Gastrocnemius medialis (tissue), 4 donors: ENCODE measurements at regions of chr9 and their contacts with region 1.

Region 1: GRCh38 chr9:72038890-72039410 is 21.5 kb downstream of the C9orf57 start:
- DNase-seq: peak; percentile 40 to 61
- ATAC-seq: peak; percentile 72 to 91
- H3K4me3 ChIP-seq: no peak overlapping the region
- H3K27ac ChIP-seq: no peak overlapping the region
- H3K4me1 ChIP-seq: no peaks in the 10 kb centered on the region
- H3K27me3 ChIP-seq: no peaks in the 10 kb centered on the region
- CTCF ChIP-seq: peak; percentile 82 to 97 (median 91)
- POLR2A ChIP-seq: no peak

Region 2: DNA sequence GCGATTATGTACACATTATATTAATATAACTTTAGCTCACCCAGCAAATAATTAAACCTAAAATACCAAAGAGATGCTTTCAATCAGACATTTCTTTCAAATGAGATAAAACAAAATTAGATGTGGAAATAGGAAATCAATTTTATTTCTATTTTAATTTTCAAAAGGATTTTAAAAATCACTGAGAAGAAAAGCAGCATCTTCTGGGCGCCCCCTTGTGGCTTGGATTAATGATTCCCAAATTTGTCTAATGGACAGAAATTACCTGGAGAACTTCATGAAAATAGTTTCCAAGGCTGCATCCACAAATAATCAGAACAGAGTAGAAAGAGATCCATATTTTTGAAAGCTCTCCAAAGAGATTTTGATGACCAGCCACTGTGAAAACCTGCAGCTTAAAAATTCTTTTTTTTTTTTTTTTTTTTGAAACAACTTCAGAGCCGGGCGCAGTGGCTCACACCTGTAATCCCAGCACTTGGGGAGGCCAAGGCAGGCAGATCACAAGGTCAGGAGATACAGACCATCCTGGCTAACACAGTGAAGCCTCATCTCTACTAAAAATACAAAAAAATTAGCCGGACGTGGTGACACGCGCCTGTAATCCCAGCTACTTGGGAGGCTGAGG is 219.7 kb before region 1 on chr9:
- in situ Hi-C with region 1: no loop called
- intact Hi-C with region 1: loop called (anchors 5 kb)
- DNase-seq: no peak
- ATAC-seq: no peak
- H3K4me3 ChIP-seq: no peak overlapping the region
- H3K27ac ChIP-seq: no peak overlapping the region
- H3K4me1 ChIP-seq: peaks cover 0 to 3% of the 10 kb centered on the region in 2 donors
- H3K27me3 ChIP-seq: no peaks in the 10 kb centered on the region
- CTCF ChIP-seq: peak; percentile 47 to 74 (median 57)
- POLR2A ChIP-seq: no peak

Region 3: DNA sequence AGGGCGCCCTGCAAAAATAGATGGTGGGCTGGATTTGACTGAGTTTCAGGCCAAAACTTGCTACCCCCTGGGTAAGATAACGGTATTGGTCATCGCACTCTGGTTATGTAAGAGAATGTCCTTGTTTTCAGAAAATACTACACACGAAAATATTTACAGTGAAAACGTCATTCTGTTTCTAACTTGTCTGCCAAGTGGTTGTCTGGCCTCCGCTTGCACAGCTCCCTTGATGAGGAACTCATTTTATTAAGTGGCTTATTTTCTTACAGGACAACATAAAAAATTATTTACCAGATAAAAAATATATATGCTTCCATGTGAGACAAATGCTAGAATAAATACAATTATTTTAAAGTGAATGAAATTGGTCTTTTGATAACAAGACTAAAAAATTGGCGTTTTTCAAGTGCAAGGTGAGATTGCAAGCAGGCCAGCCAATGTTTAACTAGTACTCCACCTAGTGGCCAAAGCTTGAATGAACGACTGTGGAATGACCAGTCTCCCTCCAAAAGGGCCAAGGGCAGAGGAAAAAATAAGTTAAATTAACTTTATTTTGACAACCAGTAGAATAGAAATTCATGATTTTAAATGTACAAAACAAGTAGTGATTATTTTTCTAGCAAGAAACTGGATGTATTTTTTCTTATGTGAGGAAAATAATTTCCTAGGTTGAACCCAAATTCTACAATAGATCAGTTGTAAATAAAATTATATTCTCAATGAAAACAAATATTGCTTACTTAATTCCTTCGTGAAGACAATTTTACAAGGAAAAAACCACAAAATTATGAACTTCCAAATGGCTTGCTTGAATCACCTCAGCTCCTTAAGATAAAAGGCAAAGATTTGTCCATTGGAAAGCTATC is 232.9 kb after region 1 on chr9:
- in situ Hi-C with region 1: loop called (anchors 5 kb)
- intact Hi-C with region 1: loop called (anchors 1 kb)
- DNase-seq: peak in 1 of 2 donors; percentile 15
- ATAC-seq: peak; percentile 69 to 73
- H3K4me3 ChIP-seq: no peak overlapping the region
- H3K27ac ChIP-seq: no peak overlapping the region
- H3K4me1 ChIP-seq: no peaks in the 10 kb centered on the region
- H3K27me3 ChIP-seq: no peaks in the 10 kb centered on the region
- CTCF ChIP-seq: peak; percentile 72 to 90 (median 75)
- POLR2A ChIP-seq: no peak

Region 4: GRCh38 chr9:72396247-72397091 is 357.5 kb after region 1 on chr9:
- in situ Hi-C with region 1: no loop called
- intact Hi-C with region 1: no loop called
- DNase-seq: peak in 1 of 2 donors; percentile 19
- ATAC-seq: peak; percentile 95 to 100
- H3K4me3 ChIP-seq: peak overlapping the region in 2 of 4 donors; percentile 3 to 24
- H3K27ac ChIP-seq: peak overlapping the region; percentile 72 to 83 (median 82)
- H3K4me1 ChIP-seq: peaks cover 5 to 17% of the 10 kb centered on the region in 2 donors
- H3K27me3 ChIP-seq: no peaks in the 10 kb centered on the region
- CTCF ChIP-seq: peak in 1 of 5 experiments; percentile 10
- POLR2A ChIP-seq: peak in 1 of 2 donors; percentile 25

Region 5: DNA sequence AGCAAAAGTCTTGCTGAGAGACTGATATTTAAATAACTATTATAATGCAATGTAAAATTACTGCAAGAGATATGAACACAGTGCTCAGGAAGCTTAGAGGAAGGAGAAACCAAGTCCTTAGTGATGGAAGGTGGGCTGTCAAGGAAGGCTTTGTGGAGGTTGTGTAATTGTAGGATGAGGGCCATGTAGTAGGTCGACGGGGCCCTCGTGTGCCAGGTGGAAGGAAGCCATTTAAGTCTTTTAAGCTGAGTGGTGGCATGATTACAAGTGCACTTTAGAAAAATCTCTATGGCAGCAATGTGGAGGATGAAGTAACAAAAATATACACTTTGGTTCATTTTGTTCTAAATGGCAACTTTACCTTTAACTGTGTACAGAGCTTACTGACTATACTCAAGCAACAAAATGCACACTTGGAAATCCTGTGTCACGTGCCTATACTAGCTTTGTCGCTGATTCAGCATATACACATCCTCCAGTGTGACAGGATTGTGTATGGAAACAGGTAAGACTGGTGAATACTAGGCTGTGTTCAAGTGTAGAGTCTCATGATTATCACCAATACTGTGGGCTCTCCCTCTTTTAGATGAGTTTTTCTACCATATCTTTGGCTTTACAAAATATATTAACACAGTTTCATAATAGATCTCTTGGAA is 561.1 kb after region 1 on chr9:
- in situ Hi-C with region 1: loop called in 3 of 4 experiments (anchors 10 to 25 kb)
- intact Hi-C with region 1: no loop called
- DNase-seq: no peak
- ATAC-seq: no peak
- H3K4me3 ChIP-seq: no peak overlapping the region
- H3K27ac ChIP-seq: no peak overlapping the region
- H3K4me1 ChIP-seq: no peaks in the 10 kb centered on the region
- H3K27me3 ChIP-seq: no peaks in the 10 kb centered on the region
- CTCF ChIP-seq: no peak
- POLR2A ChIP-seq: no peak

Region 6: GRCh38 chr9:72807765-72808445 is 769.0 kb after region 1 on chr9:
- in situ Hi-C with region 1: loop called in 1 of 4 experiments (anchors 25 kb)
- intact Hi-C with region 1: no loop called
- DNase-seq: no peak
- ATAC-seq: no peak
- H3K4me3 ChIP-seq: no peak overlapping the region
- H3K27ac ChIP-seq: no peak overlapping the region
- H3K4me1 ChIP-seq: no peaks in the 10 kb centered on the region
- H3K27me3 ChIP-seq: no peaks in the 10 kb centered on the region
- CTCF ChIP-seq: no peak
- POLR2A ChIP-seq: no peak

Region 7: DNA sequence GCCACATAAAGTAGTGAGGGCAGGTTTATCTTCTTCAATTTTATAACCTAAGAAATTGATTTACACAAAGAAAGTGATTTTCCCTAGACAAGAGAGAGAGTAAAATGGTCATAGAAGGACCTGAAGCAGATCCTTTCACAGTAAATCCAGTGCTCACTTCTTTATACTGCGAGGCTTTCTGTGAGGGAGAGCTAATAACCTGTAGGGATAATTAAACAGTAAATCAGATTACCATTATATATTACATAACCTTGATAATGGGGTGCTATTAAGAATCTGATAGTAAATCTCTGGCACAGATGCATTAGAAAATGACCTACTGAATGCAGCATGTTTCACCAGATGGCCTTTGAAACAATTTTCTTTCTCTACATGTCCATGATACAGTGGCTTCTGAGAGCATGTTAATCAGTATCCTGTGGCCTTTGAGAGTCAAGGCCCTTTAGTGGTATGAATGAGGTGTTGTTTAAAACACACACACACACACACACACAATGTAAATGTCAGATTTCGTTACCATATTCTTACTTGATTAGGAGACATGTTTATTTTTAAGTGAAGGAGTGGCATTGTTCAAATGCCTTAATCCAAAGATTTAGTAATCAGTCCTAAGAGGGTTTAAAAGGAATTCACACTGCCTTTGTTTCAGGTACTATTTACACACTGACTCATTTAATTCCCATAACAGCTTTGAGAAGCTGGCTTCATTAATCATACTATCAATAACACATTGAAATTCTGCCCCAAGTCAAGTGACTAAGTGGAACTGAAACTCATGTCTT is 789.2 kb after region 1 on chr9:
- in situ Hi-C with region 1: loop called in 3 of 4 experiments (anchors 10 to 25 kb)
- intact Hi-C with region 1: loop called (anchors 5 kb)
- DNase-seq: no peak
- ATAC-seq: no peak
- H3K4me3 ChIP-seq: no peak overlapping the region
- H3K27ac ChIP-seq: peak overlapping the region in 3 of 4 donors; percentile 14 to 27 (median 27)
- H3K4me1 ChIP-seq: peaks cover 0 to 3% of the 10 kb centered on the region in 2 donors
- H3K27me3 ChIP-seq: no peaks in the 10 kb centered on the region
- CTCF ChIP-seq: no peak
- POLR2A ChIP-seq: no peak